ENCODE measurements at regions of chr17 and their contacts with region 1.

Region 1: GRCh38 chr17:3738562-3739295 is 15.0 kb downstream of the HASPIN start:
- DNase-seq: peak in 1 of 2 donors; percentile 56
- ATAC-seq: peak; percentile 62 to 77 (median 69)
- H3K4me3 ChIP-seq: peak overlapping the region; percentile 55
- H3K27ac ChIP-seq: peak overlapping the region; percentile 76
- H3K4me1 ChIP-seq: peaks cover 5% of the 10 kb centered on the region
- H3K27me3 ChIP-seq: no peaks in the 10 kb centered on the region
- CTCF ChIP-seq: no peak

Region 2: GRCh38 chr17:3812771-3813170 is 74.0 kb after region 1 on chr17:
- intact Hi-C with region 1: loop called (anchors 5 kb)
- DNase-seq: no peak
- ATAC-seq: no peak
- H3K4me3 ChIP-seq: no peak overlapping the region
- H3K27ac ChIP-seq: no peak overlapping the region
- H3K4me1 ChIP-seq: peaks cover 17% of the 10 kb centered on the region
- H3K27me3 ChIP-seq: no peaks in the 10 kb centered on the region
- CTCF ChIP-seq: no peak

Region 3: GRCh38 chr17:3818786-3819185 is 80.1 kb after region 1 on chr17:
- intact Hi-C with region 1: loop called (anchors 5 kb)
- DNase-seq: no peak
- ATAC-seq: no peak
- H3K4me3 ChIP-seq: no peak overlapping the region
- H3K27ac ChIP-seq: no peak overlapping the region
- H3K4me1 ChIP-seq: peaks cover 17% of the 10 kb centered on the region
- H3K27me3 ChIP-seq: no peaks in the 10 kb centered on the region
- CTCF ChIP-seq: no peak

Region 4: GRCh38 chr17:3845621-3846441 is 107.1 kb after region 1 on chr17 and contains the start of gene NCBP3:
- intact Hi-C with region 1: loop called in 1 of 2 experiments (anchors 2 kb)
- DNase-seq: peak; percentile 91 to 94
- ATAC-seq: peak; percentile 97 to 99 (median 98)
- H3K4me3 ChIP-seq: peak within 1 kb of the TSS; percentile 96
- H3K27ac ChIP-seq: peak within 1 kb of the TSS; percentile 94
- H3K4me1 ChIP-seq: peaks cover 13% of the 10 kb centered on the region
- H3K27me3 ChIP-seq: no peaks in the 10 kb centered on the region
- CTCF ChIP-seq: peak; percentile 92
- total RNA-seq, gene NCBP3: 10.9 to 23.5 (median 17.7) TPM

Region 5: DNA sequence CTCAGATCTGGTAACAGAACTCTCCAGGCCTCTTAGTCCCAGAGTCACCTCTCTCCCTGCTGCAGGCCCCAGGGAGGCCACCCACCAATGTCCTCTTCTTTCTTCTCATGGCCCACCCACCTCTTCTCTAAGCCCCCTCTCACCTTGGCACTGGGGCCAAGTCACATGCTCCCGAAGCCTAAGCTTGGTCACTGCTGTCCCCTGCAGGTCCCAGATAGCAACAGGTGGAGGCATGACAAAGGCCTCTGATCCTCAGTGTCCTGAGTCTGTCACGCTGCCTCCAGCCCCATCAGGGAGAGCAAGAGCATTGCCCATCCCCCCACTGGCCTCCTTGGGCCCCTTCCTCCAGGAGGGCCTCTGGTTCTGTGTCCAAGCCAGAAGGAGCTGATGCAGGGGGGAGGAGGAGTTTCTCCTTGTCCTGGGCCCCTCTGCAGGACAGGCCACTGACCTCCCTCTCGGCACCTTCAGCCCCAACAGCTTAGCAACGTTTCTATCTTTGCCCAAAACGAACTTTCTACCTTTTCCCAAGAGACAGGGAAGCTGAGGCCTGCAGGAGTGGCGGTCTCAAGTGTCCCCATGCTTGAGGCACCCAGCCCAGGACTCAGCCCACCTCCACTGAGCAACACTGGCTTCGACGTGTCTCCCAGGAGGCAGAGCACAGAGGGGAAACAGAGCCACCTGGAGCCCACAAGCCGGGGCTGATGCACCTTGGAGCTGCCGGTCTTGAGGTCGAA is 168.9 kb after region 1 on chr17:
- intact Hi-C with region 1: loop called in 1 of 2 experiments (anchors 10 kb)
- DNase-seq: no peak
- ATAC-seq: peak in 3 of 4 donors; percentile 26 to 55 (median 52)
- H3K4me3 ChIP-seq: no peak overlapping the region
- H3K27ac ChIP-seq: no peak overlapping the region
- H3K4me1 ChIP-seq: no peaks in the 10 kb centered on the region
- H3K27me3 ChIP-seq: no peaks in the 10 kb centered on the region
- CTCF ChIP-seq: no peak

Region 6: DNA sequence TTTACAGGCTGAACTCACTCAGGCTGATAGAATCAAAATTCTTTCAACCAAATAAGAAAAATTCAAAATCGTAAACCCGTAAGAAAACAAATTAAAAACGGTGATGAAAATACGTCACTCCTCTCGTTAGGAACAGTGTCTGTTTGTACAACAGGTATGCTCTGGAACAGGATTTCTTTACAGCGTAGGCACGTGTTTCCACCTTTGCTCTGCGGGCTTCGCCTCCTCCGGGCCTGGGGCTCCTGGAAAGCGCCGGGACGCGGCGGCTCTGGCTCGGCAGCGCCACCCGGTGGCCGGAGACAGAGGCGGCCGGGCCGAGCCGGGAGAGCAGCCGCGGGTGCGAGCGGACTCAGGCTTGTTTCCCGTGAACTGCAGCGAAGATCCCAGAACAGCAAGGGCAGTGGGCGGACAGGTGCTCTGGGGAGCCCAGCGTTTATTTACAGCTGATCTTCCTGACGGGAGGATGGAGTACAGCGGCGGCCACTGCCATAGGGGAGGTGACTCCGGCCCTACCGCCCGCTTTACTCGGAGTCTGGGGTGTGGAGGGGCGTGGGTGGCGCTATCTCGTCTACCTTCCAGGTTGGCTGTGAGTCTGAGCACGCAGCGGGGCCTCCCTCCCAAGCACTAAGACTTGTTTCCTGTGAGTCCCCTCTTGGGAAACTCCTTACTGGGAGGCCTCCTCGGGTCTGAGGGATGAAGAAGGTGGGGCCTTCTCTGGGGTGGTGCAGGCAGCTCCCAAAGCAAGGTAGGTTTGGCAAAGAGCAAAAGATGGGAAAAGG is 266.0 kb after region 1 on chr17:
- intact Hi-C with region 1: loop called (anchors 5 to 10 kb)
- DNase-seq: peak; percentile 50 to 71
- ATAC-seq: peak; percentile 50 to 64 (median 56)
- H3K4me3 ChIP-seq: no peak overlapping the region
- H3K27ac ChIP-seq: no peak overlapping the region
- H3K4me1 ChIP-seq: peaks cover 5% of the 10 kb centered on the region
- H3K27me3 ChIP-seq: no peaks in the 10 kb centered on the region
- CTCF ChIP-seq: peak; percentile 92

Measured in psoas muscle (tissue), 8 donors.